ENCODE measurements at regions of chr5 and their contacts with region 1.

Region 1: DNA sequence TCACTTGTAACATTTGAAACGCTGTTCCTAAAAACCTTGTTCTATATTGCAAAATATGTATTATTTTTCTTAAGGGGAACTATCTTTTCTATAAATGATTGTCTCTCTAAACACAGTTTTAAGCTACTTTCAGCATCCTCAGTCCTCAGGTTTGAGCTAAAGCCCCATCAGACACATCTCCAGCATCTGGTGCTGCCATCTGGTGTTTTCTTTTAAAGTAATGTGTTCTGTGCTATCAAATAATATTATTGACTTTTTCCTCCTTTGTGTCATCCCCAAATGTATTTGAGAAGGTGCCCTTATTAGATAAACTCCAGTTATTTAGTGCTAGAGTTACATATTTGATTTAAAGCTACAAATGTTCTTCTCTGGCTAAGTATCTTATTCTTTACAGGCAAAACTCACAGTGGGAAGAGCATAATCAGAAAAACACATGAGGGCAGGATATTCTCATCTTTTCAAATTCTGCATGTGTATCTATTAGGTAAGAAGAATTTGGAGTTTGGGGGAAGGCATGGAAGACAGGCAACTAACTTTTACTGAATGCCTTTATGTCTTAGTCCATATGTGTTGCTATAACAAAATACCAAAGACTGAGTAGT is 27.5 kb downstream of the ZNF474 start:
- DNase-seq: no peak
- H3K4me3 ChIP-seq: no peak overlapping the region
- H3K27me3 ChIP-seq: no peaks in the 10 kb centered on the region
- CTCF ChIP-seq: peak; percentile 50

Region 2: DNA sequence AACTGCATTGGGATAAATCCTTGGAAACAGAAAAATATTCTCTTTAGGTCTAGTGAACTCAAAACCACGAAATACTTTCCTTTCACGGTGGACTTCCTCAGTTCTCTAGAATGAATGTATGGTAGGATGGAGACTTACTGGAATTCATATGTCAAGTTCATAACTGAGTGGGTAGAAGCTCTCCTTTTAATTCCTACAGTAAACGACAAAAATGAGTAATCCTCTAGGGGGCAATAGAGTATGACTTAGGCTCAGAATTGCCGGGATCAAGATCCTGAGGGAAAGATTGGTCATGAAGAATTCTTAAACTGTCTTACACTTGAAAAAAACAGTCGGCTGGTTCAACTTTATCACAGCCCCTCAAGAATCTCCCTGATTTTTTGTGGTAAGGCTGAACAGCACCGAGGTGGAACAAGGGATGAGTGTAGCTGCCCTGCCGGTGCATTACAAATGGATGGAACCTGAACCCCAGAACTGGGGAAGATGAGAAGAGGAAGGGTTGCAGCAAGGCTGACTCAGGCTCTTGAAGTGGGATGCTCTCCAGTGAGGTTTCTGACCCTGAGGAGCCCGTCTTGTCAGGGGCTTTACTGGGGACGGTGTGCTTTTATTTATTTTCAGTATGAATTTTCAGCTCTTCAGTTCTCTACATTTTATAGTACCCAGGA is 64.8 kb before region 1 on chr5:
- CTCF ChIA-PET with region 1: interaction called, 42 read pairs
- POLR2A ChIA-PET with region 1: interaction called, 3 read pairs
- DNase-seq: no peak
- H3K4me3 ChIP-seq: no peak overlapping the region
- H3K27me3 ChIP-seq: no peaks in the 10 kb centered on the region
- CTCF ChIP-seq: peak; percentile 62

Region 3: DNA sequence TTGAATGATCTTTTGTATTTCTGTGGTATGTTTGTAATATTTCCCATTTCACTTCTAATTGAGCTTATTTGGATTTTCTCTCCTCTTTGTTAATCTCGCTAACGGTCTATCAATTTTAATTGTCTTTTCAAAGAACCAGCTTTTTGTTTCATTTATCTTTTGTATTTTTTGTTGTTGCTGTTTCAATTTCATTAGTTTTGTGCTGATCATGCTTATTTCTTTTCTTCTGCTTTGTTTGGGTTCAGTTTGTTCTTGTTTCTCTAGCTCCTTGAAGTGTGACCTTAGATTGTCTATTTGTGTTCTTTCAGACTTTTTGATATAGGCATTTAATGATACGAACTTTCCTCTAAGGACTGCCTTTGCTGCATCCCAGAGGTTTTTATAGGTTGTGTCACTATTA is 126.8 kb after region 1 on chr5:
- CTCF ChIA-PET with region 1: no interaction called
- POLR2A ChIA-PET with region 1: no interaction called
- DNase-seq: no peak
- H3K4me3 ChIP-seq: no peak overlapping the region
- H3K27me3 ChIP-seq: no peaks in the 10 kb centered on the region
- CTCF ChIP-seq: no peak

Measured in BJ (cell line).